Naive thymus-derived CD4-positive, alpha-beta T cell (primary cell): ENCODE measurements at regions of chr10 and their contacts with region 1.

Region 1: GRCh38 chr10:15209827-15210509 is 41.5 kb upstream of the NMT2 start:
- DNase-seq: peak; percentile 49 to 75 (median 71)
- ATAC-seq: peak; percentile 77
- H3K4me3 ChIP-seq: peak overlapping the region; percentile 4
- H3K4me3 Mint-ChIP-seq: peak overlapping the region; percentile 16 to 82 (median 62)
- H3K27ac ChIP-seq: peak overlapping the region; percentile 18
- H3K27ac Mint-ChIP-seq: peak overlapping the region; percentile 13 to 99 (median 85)
- H3K4me1 ChIP-seq: peaks cover 23 to 47% of the 10 kb centered on the region in 2 donors
- H3K4me1 Mint-ChIP-seq: peaks cover 30 to 67% (median 63%) of the 10 kb centered on the region in 7 donors
- H3K27me3 ChIP-seq: no peaks in the 10 kb centered on the region
- H3K27me3 Mint-ChIP-seq: no peaks in the 10 kb centered on the region

Region 2: DNA sequence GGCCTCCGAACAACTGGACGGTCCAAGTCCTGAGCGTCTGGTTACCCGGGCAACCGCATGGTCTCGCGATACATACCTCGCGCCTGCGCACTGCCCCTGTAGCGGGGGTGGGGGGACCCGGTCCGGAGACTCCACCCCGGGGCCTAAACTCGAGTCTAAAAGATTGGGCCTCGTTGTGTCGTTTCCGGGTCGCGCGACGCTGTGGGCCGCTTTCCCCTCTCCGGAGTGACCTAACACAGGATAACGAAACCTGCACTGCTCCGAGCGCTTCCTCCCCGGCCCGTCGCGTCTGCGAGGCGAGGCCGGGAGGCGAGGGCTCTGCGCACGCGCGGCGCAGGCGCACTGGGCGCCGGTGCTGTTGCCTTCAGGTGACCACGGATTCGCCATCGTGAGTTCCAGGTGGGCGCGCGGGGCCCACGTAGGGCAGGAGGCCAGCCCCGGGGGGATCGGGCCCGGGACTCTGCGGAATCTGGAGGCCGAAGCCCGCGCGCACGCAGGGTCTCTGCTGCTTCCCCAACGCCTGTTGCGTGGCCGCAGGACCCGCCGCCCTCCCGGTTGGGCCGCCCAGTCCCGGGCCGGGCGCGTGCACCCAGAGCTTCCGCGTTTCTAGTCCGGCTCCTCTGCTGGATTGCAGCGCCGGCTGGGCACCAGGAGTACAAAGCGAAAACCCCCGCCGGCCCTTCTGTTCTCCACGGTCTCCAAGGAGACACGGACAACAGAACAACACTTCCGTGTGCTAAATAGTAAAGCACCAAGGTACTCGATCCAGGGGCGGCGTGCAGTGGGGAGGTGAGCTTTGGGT is 112.8 kb before region 1 on chr10 and contains the start of gene RPP38:
- CTCF ChIA-PET with region 1: no interaction called
- POLR2A ChIA-PET with region 1: no interaction called
- intact Hi-C with region 1: loop called (anchors 1 kb)
- DNase-seq: peak; percentile 88 to 98 (median 95)
- ATAC-seq: peak; percentile 85
- H3K4me3 ChIP-seq: peak within 1 kb of the TSS; percentile 80
- H3K4me3 Mint-ChIP-seq: peak within 1 kb of the TSS; percentile 91 to 100 (median 98)
- H3K27ac ChIP-seq: peak within 1 kb of the TSS; percentile 94
- H3K27ac Mint-ChIP-seq: peak within 1 kb of the TSS; percentile 94 to 100 (median 98)
- H3K4me1 ChIP-seq: peaks cover 16 to 22% of the 10 kb centered on the region in 2 donors
- H3K4me1 Mint-ChIP-seq: peaks cover 22 to 50% (median 40%) of the 10 kb centered on the region in 7 donors
- H3K27me3 ChIP-seq: no peaks in the 10 kb centered on the region
- H3K27me3 Mint-ChIP-seq: peaks cover 0 to 3% (median 0%) of the 10 kb centered on the region in 5 donors
- total RNA-seq, gene RPP38: 7.6 to 22.4 (median 16.0) TPM

Region 3: DNA sequence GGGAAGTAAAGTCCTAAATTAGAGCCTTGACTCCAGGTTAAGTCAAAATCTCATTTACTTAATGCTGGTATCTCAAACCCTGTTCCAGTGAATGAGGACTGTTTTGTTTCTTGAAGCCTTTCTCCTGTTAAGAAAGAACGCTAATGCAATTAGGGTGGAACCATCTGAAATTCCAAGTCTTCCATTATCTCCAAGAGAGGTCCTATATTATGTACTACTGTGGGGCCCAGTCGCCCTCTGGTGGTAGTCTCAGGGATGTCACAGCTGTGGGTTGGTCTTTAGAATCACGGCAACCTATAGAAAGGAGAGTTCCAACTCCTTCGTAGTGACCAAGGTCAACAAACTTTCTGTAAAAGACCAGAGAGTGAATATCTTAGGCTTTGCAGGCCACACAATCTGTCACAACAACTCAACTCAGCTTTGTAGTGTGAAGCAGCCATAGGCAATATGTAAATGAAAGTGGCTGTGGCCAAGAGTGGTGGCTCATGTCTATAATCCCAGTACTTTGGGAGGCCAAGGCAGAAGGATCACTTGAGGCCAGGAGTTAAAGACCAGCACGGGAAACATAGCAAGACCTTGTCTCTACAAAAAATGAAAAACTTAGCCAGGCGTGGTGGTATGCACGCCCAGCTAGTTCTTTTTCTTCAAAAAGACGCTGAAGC is 103.5 kb before region 1 on chr10:
- CTCF ChIA-PET with region 1: no interaction called
- POLR2A ChIA-PET with region 1: no interaction called
- intact Hi-C with region 1: loop called in 1 of 2 experiments (anchors 2 kb)
- DNase-seq: peak; percentile 41 to 67 (median 58)
- ATAC-seq: peak; percentile 99
- H3K4me3 ChIP-seq: no peak overlapping the region
- H3K4me3 Mint-ChIP-seq: no peak overlapping the region
- H3K27ac ChIP-seq: peak overlapping the region; percentile 9
- H3K27ac Mint-ChIP-seq: peak overlapping the region; percentile 26 to 88 (median 68)
- H3K4me1 ChIP-seq: no peaks in the 10 kb centered on the region
- H3K4me1 Mint-ChIP-seq: peaks cover 3 to 9% (median 5%) of the 10 kb centered on the region in 7 donors
- H3K27me3 ChIP-seq: no peaks in the 10 kb centered on the region
- H3K27me3 Mint-ChIP-seq: no peaks in the 10 kb centered on the region

Region 4: GRCh38 chr10:15141136-15142054 is 68.6 kb before region 1 on chr10:
- CTCF ChIA-PET with region 1: interaction called, 7 read pairs
- POLR2A ChIA-PET with region 1: interaction called, 4 read pairs
- intact Hi-C with region 1: loop called in 1 of 2 experiments (anchors 2 kb)
- DNase-seq: peak in 3 of 9 donors; percentile 8 to 31 (median 9)
- ATAC-seq: peak; percentile 49
- H3K4me3 ChIP-seq: no peak overlapping the region
- H3K4me3 Mint-ChIP-seq: peak overlapping the region; percentile 21 to 83 (median 66)
- H3K27ac ChIP-seq: no peak overlapping the region
- H3K27ac Mint-ChIP-seq: peak overlapping the region in 8 of 9 donors; percentile 3 to 89 (median 53)
- H3K4me1 ChIP-seq: peaks cover 0 to 20% of the 10 kb centered on the region in 2 donors
- H3K4me1 Mint-ChIP-seq: peaks cover 28 to 74% (median 58%) of the 10 kb centered on the region in 7 donors
- H3K27me3 ChIP-seq: no peaks in the 10 kb centered on the region
- H3K27me3 Mint-ChIP-seq: no peaks in the 10 kb centered on the region

Region 5: DNA sequence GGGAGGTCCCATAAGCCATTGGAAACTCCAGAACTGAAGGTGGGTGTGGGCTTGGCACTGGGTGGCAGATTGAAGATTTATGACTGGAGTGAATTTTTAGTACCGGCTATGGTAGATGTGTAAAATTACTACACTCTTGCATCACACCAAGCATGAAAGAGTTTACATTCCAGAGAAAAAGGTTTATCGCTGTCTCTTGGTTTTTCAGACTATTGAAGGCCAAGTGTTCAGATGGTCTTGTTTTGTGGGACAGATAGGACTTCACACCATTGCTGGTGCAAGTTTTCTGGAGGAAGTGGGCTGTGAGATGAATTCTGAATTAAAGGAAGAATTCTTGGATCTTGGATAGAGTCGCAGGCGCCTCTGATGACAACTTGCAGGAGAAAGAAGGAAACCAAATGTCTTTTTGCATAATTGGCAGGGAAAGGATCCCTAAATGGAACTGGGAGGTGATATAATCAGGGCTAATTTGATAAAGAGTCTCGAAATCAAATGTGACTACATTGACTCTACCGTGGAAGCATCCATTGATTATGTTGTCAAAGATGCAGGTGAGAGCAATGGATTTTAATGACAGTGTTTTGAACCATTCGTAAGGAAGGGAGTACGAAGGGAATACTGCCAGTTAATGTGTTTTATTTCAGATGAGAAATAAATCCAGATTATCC is 27.3 kb before region 1 on chr10:
- CTCF ChIA-PET with region 1: interaction called, 13 read pairs
- POLR2A ChIA-PET with region 1: interaction called, 18 read pairs
- intact Hi-C with region 1: loop called in 1 of 2 experiments (anchors 1 kb)
- DNase-seq: no peak
- ATAC-seq: no peak
- H3K4me3 ChIP-seq: no peak overlapping the region
- H3K4me3 Mint-ChIP-seq: no peak overlapping the region
- H3K27ac ChIP-seq: no peak overlapping the region
- H3K27ac Mint-ChIP-seq: peak overlapping the region in 5 of 9 donors; percentile 53 to 76 (median 62)
- H3K4me1 ChIP-seq: peaks cover 10 to 24% of the 10 kb centered on the region in 2 donors
- H3K4me1 Mint-ChIP-seq: peaks cover 20 to 53% (median 44%) of the 10 kb centered on the region in 7 donors
- H3K27me3 ChIP-seq: no peaks in the 10 kb centered on the region
- H3K27me3 Mint-ChIP-seq: peaks cover 0 to 4% (median 0%) of the 10 kb centered on the region in 5 donors

Region 6: GRCh38 chr10:15189133-15189885 is 20.7 kb before region 1 on chr10:
- CTCF ChIA-PET with region 1: interaction called, 13 read pairs
- POLR2A ChIA-PET with region 1: interaction called, 18 read pairs
- intact Hi-C with region 1: loop called (anchors 1 to 2 kb)
- DNase-seq: no peak
- ATAC-seq: peak; percentile 55
- H3K4me3 ChIP-seq: no peak overlapping the region
- H3K4me3 Mint-ChIP-seq: peak overlapping the region in 9 of 10 donors; percentile 39 to 79 (median 66)
- H3K27ac ChIP-seq: no peak overlapping the region
- H3K27ac Mint-ChIP-seq: peak overlapping the region; percentile 59 to 94 (median 88)
- H3K4me1 ChIP-seq: peaks cover 10 to 48% of the 10 kb centered on the region in 2 donors
- H3K4me1 Mint-ChIP-seq: peaks cover 22 to 73% (median 60%) of the 10 kb centered on the region in 7 donors
- H3K27me3 ChIP-seq: no peaks in the 10 kb centered on the region
- H3K27me3 Mint-ChIP-seq: no peaks in the 10 kb centered on the region

Region 7: DNA sequence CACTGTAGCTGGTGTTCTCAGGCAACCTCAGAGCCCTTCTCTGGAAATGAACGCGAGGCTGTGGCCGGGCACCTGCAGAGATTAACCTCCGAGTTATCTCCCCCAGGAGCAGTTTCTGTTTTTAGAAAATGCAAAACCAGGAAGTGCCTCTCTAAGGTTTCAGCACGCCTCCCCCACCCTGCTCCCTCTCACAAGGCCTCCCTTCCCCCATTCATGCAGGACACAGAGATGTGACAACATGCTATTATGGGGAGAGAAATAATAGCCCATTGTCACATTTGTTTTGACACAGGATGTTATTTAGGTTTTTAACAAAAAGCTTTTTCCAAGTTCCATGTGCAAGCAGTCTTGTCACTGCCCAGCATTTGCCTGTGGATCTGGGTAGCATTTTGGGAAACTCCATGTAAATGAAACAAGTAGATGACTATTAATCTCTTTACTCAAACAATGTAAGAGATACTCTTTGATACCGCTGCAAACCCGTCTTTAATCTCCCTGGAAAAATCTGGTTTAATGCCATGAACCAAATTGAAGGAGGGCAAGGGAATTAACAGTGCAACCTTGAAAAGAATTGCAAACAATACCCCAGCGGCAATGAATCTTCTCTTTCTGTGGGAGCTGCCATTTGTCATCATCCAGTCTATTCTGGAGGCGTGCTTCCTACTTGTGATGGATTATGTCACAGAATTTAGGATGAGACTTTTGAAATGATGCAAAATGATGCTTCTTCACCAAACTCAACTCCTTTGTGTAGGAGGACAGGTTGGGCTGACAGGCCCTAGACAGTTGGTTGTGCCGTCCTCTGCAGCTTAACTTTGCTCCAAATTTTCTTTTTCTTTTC is 45.1 kb after region 1 on chr10:
- CTCF ChIA-PET with region 1: no interaction called
- POLR2A ChIA-PET with region 1: interaction called, 3 read pairs
- intact Hi-C with region 1: loop called in 1 of 2 experiments (anchors 5 kb)
- DNase-seq: peak in 6 of 9 donors; percentile 10 to 35 (median 24)
- ATAC-seq: peak; percentile 45
- H3K4me3 ChIP-seq: peak overlapping the region; percentile 74
- H3K4me3 Mint-ChIP-seq: peak overlapping the region; percentile 87 to 99 (median 95)
- H3K27ac ChIP-seq: peak overlapping the region; percentile 76
- H3K27ac Mint-ChIP-seq: peak overlapping the region; percentile 68 to 95 (median 93)
- H3K4me1 ChIP-seq: peaks cover 8 to 10% of the 10 kb centered on the region in 2 donors
- H3K4me1 Mint-ChIP-seq: peaks cover 22 to 52% (median 44%) of the 10 kb centered on the region in 7 donors
- H3K27me3 ChIP-seq: no peaks in the 10 kb centered on the region
- H3K27me3 Mint-ChIP-seq: peaks cover 0 to 5% (median 0%) of the 10 kb centered on the region in 5 donors